ENCODE measurements at regions of chr9 and their contacts with region 1.

Region 1: GRCh38 chr9:113828221-113828620 is 47.9 kb upstream of the ZNF618 start:
- DNase-seq: peak in 2 of 3 donors; percentile 50 to 67
- H3K4me3 ChIP-seq: peak overlapping the region in 2 of 7 experiments; percentile 9 to 13
- H3K27ac ChIP-seq: no peak overlapping the region
- H3K4me1 ChIP-seq: peaks cover 0 to 7% (median 2%) of the 10 kb centered on the region in 4 experiments
- H3K27me3 ChIP-seq: no peaks in the 10 kb centered on the region

Region 2: DNA sequence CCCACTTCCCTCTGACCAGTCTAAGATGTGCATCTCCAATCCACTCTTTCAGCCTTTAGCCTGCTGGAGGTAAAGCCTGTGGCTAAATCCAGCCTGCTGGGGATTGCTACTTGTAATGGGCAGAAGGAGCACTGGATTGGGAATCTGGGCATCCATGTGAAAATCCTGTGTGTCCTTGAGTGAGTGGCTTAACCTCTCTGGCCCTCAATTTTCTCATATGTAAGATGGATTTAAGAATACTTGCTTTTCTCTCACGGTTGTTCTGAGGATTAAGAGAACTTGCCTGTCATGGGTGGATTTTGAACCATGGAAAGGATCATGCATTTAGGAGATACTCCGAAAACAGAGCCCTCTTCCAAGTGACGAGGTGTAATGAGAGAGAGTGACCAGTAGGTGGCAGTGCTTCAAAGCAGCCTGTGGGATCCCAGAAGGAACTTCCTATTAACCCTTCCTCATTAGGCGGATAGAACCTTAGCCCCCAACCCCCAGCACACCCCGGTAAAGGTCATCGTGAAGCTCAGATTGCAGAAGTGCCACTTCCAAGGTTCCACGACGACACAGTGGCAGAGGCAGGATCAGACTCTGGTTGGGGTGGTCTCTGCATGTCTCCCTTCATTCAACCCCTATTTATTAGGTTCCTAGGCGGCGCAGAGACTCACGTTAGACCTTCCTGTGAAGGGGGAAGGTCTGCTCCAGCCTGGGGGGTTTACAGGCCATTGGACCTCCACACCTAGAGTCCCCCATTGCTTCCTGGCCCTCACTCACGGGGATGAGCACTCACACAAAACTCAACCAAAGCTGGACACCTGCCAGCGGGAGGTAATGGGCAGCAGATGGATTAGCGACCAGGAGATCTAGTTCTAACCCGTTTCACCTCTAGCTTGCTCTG is 20.8 kb before region 1 on chr9:
- CTCF ChIA-PET with region 1: interaction called, 19 read pairs
- POLR2A ChIA-PET with region 1: no interaction called
- DNase-seq: peak; percentile 67 to 80 (median 77)
- H3K4me3 ChIP-seq: peak overlapping the region in 4 of 7 experiments; percentile 21 to 79 (median 45)
- H3K27ac ChIP-seq: no peak overlapping the region
- H3K4me1 ChIP-seq: peaks cover 0 to 7% (median 5%) of the 10 kb centered on the region in 4 experiments
- H3K27me3 ChIP-seq: no peaks in the 10 kb centered on the region